Activated CD8-positive, alpha-beta T cell treated with anti-CD3 and anti-CD28 coated beads, Interleukin-2, amount 10 ng/mL, durations not matched to agents 7 days and 5 days (primary cell): ENCODE measurements at regions of chr1 and their contacts with region 1.

Region 1: DNA sequence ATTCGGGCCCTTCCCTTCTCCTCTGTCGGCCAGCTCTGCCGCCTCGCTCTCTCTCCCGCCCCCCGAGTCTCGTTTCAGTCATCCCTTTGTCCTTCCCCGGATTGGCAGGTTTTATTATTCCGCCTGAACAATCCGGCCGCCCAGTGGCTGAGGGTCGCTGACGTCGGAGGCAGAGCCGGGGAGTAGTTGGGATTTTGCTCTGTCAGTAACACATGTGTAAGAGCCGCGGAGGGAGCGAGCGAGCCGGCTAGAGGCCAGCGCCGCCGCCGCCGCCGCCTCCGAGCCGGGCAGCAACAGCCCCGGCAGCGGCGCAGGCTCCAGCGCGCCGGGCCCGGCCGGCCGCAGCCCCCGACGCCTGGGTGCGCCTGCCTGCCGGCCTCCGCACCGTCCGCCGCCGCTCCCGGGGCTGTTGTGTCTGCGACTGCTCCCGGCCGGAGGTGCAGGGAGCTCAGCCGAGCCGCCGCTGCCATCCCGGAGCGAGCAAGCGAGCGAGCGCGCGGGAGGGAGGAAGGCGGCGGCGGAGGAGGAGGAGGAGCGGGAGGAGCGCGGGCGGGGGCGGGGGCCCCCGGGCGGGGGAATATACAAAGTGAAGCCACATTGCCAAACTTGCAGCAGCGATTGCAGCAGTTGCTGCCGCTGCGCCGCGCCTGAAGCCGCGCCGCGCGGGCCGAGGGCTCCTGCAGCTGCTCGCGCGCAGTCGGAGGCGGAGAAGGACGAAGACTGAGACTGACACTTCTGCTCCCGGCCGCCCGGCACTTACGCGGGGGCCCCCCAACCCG is at the start of gene LMO4:
- DNase-seq: peak; percentile 94
- ATAC-seq: peak; percentile 78
- H3K4me3 Mint-ChIP-seq: peak within 1 kb of the TSS; percentile 84
- H3K27ac Mint-ChIP-seq: peak within 1 kb of the TSS; percentile 97
- H3K4me1 Mint-ChIP-seq: peaks cover 28% of the 10 kb centered on the region
- H3K27me3 Mint-ChIP-seq: peaks cover 3% of the 10 kb centered on the region
- total RNA-seq, gene LMO4: 38.3 to 39.3 TPM

Region 2: DNA sequence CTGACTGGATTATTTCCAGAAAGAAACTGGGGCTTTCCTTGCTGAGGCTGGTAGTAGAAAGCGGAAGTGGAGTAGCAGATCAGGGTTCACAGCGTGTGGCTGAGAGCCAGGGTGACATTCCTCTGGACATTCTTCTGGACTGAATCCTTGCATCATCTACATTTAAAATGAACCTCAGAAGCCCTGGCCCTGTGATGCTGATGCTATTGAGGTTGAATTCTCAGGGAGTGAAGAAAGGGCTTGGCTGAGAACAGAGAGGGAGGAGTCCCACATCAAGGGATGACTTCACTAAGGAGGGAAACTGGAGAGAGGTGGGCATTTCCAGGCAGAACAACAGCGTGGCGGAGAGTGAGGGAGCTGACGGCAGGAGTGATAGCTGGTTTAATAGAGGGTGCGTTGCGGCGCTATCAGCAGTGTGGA is 102.1 kb before region 1 on chr1:
- CTCF ChIA-PET with region 1: no interaction called
- POLR2A ChIA-PET with region 1: no interaction called
- DNase-seq: no peak
- ATAC-seq: no peak
- H3K4me3 Mint-ChIP-seq: no peak overlapping the region
- H3K27ac Mint-ChIP-seq: no peak overlapping the region
- H3K4me1 Mint-ChIP-seq: no peaks in the 10 kb centered on the region
- H3K27me3 Mint-ChIP-seq: no peaks in the 10 kb centered on the region

Region 3: DNA sequence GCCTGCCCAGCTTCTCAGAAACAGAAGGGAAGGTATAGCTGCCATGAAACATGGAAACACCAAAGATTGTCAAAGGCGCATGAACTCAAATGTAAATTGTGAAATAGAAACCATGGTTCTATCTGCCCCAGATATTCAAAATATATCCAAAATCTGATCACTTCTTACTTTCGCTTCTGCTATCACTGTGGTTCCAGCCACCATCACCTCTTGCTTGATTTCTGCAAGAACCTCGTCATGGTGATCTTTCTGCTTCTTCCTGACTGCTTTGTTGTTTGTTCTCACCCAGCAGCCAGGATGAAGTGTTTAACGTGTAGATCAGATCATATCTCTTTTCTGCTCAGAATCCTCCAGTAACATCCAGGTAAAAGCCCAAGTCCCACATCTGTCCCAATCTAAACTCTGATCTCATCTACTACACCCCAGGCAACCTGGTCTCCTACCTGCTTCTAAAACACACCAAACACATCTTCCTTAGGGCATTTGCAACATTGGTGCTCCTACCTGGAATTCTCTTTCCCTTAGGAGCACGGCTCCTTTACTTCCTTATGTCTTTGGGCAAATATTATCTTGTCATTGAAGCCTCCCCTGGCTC is 10.3 kb before region 1 on chr1:
- CTCF ChIA-PET with region 1: interaction called, 17 read pairs
- POLR2A ChIA-PET with region 1: no interaction called
- DNase-seq: no peak
- ATAC-seq: no peak
- H3K4me3 Mint-ChIP-seq: no peak overlapping the region
- H3K27ac Mint-ChIP-seq: no peak overlapping the region
- H3K4me1 Mint-ChIP-seq: peaks cover 6% of the 10 kb centered on the region
- H3K27me3 Mint-ChIP-seq: peaks cover 21% of the 10 kb centered on the region

Region 4: DNA sequence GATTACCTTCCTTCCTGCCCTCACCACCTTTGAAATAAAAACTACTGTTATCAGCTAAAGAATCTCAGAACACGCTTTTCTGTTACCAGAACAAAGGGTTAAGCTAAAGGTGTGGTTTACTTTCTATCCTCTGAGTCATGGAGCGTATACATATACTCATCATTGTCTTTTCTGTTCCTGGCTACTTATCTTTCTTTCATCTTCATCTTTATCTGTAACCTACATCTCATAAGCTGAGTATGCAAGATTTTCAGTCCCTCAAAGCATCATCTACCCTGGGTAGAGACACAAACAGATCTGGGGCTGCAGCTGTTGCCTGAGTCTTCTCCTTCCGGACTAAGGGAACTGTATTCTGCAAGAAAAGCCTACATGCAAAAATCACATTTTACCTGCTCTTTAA is 75.8 kb after region 1 on chr1:
- CTCF ChIA-PET with region 1: interaction called, 11 read pairs
- POLR2A ChIA-PET with region 1: interaction called, 5 read pairs
- DNase-seq: peak; percentile 27
- ATAC-seq: peak; percentile 91
- H3K4me3 Mint-ChIP-seq: no peak overlapping the region
- H3K27ac Mint-ChIP-seq: peak overlapping the region; percentile 55
- H3K4me1 Mint-ChIP-seq: peaks cover 23% of the 10 kb centered on the region
- H3K27me3 Mint-ChIP-seq: peaks cover 9% of the 10 kb centered on the region

Region 5: DNA sequence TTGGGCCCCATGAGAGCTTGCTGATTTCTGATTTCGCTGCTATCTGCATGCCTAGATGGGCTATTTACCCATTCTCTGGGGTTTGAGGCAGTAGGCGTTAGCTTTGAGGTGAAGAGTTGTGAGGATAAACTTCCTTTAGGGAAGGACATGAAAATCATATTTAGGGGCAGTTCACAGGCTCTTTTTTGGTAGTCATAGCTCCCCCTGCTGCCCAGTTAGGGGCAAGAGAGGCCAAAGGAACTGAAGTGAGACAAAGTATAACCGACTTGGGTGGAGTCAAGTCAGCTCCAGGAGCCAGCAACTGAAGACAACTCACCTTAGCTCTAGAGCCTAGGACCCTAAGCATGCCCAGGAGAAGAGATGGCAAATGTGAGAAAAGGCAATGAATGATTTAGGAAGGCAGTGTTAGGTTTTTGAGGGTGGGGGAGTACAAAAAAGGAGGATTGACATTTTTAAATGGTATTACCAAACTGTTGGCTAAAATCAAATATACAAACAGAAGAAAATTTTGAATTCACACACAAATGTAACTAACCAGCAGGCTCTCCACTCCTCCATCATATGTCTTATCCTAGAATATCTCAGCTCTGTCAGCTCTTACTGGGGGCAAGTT is 625.4 kb after region 1 on chr1:
- CTCF ChIA-PET with region 1: interaction called, 38 read pairs
- POLR2A ChIA-PET with region 1: no interaction called
- DNase-seq: peak; percentile 59
- ATAC-seq: peak; percentile 70
- H3K4me3 Mint-ChIP-seq: no peak overlapping the region
- H3K27ac Mint-ChIP-seq: no peak overlapping the region
- H3K4me1 Mint-ChIP-seq: no peaks in the 10 kb centered on the region
- H3K27me3 Mint-ChIP-seq: peaks cover 10% of the 10 kb centered on the region